K562 (cell line): ENCODE measurements at regions of chr14 and their contacts with region 1.

Region 1: GRCh38 chr14:75752907-75753594 is 92.0 kb downstream of the TTLL5 start:
- DNase-seq: no peak
- ATAC-seq: no peak
- H3K4me3 ChIP-seq: no peak overlapping the region
- H3K27ac ChIP-seq: no peak overlapping the region
- H3K4me1 ChIP-seq: peaks cover 0 to 3% of the 10 kb centered on the region in 2 experiments; a peak in 2 of 5 replicates
- H3K27me3 ChIP-seq: no peaks in the 10 kb centered on the region
- CTCF ChIP-seq: no peak
- EP300 ChIP-seq: no peak
- POLR2A ChIP-seq: no peak
- RAD21 ChIP-seq: no peak

Region 2: DNA sequence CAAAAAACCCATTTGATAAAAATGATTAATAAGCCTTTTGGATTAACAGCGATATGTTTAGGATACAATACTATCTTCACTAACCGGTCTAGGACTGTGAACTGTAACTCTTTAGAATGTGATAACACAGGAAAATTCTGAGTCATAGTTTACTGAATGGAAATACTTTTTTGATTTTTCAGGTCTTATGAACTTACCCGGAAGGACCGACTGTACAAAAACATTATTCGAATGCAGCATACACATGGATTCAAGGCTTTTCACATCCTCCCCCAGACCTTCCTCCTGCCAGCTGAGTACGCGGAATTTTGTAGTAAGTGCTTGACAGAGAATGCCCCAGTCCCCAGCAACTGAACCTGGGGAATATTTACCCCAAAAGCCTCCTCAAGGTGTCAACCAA is 63.0 kb before region 1 on chr14:
- CTCF ChIA-PET with region 1: no interaction called
- POLR2A ChIA-PET with region 1: no interaction called
- in situ Hi-C with region 1: no loop called
- intact Hi-C with region 1: loop called (anchors 10 kb)
- DNase-seq: no peak
- ATAC-seq: no peak
- H3K4me3 ChIP-seq: no peak overlapping the region
- H3K27ac ChIP-seq: no peak overlapping the region
- H3K4me1 ChIP-seq: no peaks in the 10 kb centered on the region
- H3K27me3 ChIP-seq: no peaks in the 10 kb centered on the region
- CTCF ChIP-seq: no peak
- EP300 ChIP-seq: no peak
- POLR2A ChIP-seq: no peak
- RAD21 ChIP-seq: no peak

Region 3: DNA sequence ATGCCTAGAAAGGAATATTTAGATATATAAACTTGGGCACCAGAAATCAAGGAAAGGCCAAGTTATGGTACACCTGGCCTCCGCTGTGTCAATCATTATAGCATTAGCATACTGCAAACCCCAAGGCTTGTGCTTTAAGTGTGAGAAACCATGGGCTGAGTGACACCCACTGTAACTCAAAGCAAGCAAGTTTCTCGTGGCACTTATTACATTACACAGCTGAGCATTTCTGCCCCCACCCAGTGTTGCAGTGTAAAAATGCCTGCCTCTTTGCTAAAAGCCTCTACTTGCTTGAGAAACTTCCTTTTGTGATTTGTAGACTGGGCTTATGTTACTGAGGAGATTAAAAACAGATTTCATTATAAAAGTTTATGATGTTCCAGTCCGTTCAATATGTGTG is 106.7 kb after region 1 on chr14:
- CTCF ChIA-PET with region 1: no interaction called
- POLR2A ChIA-PET with region 1: no interaction called
- in situ Hi-C with region 1: no loop called
- intact Hi-C with region 1: no loop called
- DNase-seq: no peak
- ATAC-seq: no peak
- H3K4me3 ChIP-seq: no peak overlapping the region
- H3K27ac ChIP-seq: no peak overlapping the region
- H3K4me1 ChIP-seq: peaks cover 0 to 22% of the 10 kb centered on the region in 2 experiments; a peak in 3 of 5 replicates
- H3K27me3 ChIP-seq: no peaks in the 10 kb centered on the region
- CTCF ChIP-seq: no peak
- EP300 ChIP-seq: no peak
- POLR2A ChIP-seq: no peak
- RAD21 ChIP-seq: no peak

Region 4: DNA sequence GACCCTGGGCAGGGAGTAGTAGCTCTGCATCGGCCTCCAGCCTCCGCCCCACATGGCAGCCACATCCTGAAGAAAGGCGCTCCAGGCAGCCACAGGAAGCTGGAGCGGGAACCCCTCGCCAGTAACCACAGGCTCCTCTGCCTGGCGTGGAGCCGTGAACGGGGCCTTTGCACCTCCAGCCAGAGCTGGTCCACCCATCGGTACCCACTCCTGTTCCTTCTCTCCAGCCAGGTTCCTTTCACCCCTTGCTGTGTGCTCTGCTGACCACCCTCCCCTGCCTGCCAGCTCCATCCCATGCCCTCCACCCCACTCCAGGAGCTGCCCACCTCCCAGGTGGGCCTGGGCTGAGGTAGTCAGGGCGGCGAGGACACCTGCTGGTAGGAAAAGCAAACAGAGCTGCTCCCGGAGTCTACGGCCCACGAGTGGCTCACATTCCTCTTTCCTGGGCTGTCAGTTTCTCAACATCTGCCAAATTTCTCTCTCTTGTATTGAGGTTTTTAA is 226.1 kb after region 1 on chr14:
- CTCF ChIA-PET with region 1: no interaction called
- POLR2A ChIA-PET with region 1: no interaction called
- in situ Hi-C with region 1: no loop called
- intact Hi-C with region 1: no loop called
- DNase-seq: peak; percentile 17 to 27 (median 23)
- ATAC-seq: no peak
- H3K4me3 ChIP-seq: no peak overlapping the region
- H3K27ac ChIP-seq: no peak overlapping the region
- H3K4me1 ChIP-seq: peaks cover 0 to 22% of the 10 kb centered on the region in 2 experiments; a peak in 3 of 5 replicates
- H3K27me3 ChIP-seq: no peaks in the 10 kb centered on the region
- CTCF ChIP-seq: peak; percentile 47 to 63 (median 60)
- EP300 ChIP-seq: no peak
- POLR2A ChIP-seq: no peak
- RAD21 ChIP-seq: peak; percentile 41 to 67